MCF 10A (cell line): ENCODE measurements at regions of chr1 and their contacts with region 1.

Region 1: GRCh38 chr1:32521165-32521564 is 18.1 kb upstream of the ZBTB8A start:
- DNase-seq: no peak
- H3K4me3 Mint-ChIP-seq: peak overlapping the region; percentile 66
- H3K27ac Mint-ChIP-seq: no peak overlapping the region
- H3K4me1 Mint-ChIP-seq: peaks cover 5% of the 10 kb centered on the region
- H3K27me3 Mint-ChIP-seq: no peaks in the 10 kb centered on the region
- CTCF ChIP-seq: no peak

Region 2: DNA sequence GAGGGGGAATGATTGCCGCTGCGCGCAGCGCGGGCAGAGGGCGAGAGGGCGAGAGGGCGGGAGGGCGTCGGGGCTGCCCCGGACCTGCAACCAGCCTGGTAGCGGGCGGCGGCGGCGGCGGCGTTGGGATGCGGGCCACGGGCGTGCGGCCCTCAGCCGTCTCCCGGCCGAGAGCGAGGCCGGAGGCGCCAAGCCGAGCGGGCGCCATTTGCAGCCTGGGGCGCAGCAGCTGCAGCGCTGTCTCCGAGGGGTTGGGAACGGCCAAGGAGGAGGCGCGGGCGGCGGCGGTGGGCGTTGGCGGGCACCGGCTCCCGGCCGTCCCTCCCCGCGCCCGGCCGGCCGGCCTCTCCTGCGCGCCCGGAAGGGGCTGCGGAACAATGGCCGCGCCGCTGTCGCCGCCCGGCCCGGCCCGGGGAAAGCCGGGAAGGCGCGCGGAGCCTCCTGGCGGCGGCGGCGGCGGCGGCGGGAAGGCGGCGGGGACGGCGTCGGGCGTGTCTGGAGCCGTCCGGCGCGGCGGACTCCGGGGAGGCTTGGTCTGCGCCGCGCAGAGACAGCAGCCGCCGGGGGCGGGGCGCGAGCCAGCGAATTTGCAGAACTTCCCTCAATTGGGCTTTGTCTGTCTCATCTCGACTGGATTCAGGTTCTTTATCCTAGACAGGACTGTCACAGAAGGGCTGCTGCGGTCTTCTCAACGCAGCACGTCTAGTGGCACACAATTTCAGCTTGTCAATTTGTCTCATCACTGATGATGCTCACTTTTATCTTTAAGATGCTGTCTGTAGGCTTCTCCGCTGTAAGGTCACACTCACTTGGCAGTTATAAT is 20.6 kb before region 1 on chr1:
- CTCF ChIA-PET with region 1: interaction called, 13 read pairs
- POLR2A ChIA-PET with region 1: no interaction called
- intact Hi-C with region 1: no loop called
- DNase-seq: peak; percentile 67
- H3K4me3 Mint-ChIP-seq: peak overlapping the region; percentile 90
- H3K27ac Mint-ChIP-seq: peak overlapping the region; percentile 91
- H3K4me1 Mint-ChIP-seq: peaks cover 12% of the 10 kb centered on the region
- H3K27me3 Mint-ChIP-seq: no peaks in the 10 kb centered on the region
- CTCF ChIP-seq: no peak

Region 3: GRCh38 chr1:32533792-32534327 is 12.7 kb after region 1 on chr1:
- CTCF ChIA-PET with region 1: interaction called, 16 read pairs
- POLR2A ChIA-PET with region 1: interaction called, 5 read pairs
- intact Hi-C with region 1: no loop called
- DNase-seq: no peak
- H3K4me3 Mint-ChIP-seq: no peak overlapping the region
- H3K27ac Mint-ChIP-seq: no peak overlapping the region
- H3K4me1 Mint-ChIP-seq: peaks cover 3% of the 10 kb centered on the region
- H3K27me3 Mint-ChIP-seq: no peaks in the 10 kb centered on the region
- CTCF ChIP-seq: no peak

Region 4: DNA sequence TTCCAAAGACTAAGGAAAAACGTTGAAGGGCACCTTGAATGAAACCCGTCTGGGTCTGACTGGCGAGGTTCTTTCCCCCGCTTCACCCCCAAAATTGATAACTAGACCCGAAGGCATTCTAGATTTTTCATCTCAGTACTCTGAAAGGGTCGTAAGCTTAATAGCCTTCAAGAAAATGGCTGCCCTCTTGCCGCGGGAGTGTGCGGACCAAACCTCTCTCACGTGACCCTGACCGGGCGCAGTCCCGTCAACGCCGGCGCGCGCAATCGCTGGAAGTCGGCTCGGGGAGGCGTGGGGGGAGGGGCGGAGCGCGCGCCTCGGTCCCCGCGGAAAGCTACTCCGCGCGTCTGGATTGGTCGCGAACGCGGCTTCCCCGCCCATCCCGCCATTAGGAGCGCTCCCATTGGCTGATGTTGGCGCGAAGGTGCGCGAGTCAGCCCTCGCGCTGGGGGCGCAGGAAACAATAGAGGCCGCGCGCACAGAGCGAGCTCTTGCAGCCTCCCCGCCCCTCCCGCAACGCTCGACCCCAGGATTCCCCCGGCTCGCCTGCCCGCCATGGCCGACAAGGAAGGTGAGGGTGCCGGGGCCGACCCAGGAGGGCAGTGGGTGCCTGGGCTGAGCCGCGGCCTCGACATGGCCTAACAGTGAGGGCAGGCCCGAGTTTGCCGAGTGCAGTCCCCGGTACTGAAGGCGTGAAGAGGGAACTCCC is 129.7 kb after region 1 on chr1 and contains the start of gene RBBP4:
- CTCF ChIA-PET with region 1: interaction called, 13 read pairs
- POLR2A ChIA-PET with region 1: interaction called, 7 read pairs
- intact Hi-C with region 1: loop called (anchors 1 kb)
- DNase-seq: peak; percentile 96
- H3K4me3 Mint-ChIP-seq: peak within 1 kb of the TSS; percentile 97
- H3K27ac Mint-ChIP-seq: peak within 1 kb of the TSS; percentile 100
- H3K4me1 Mint-ChIP-seq: peaks cover 14% of the 10 kb centered on the region
- H3K27me3 Mint-ChIP-seq: no peaks in the 10 kb centered on the region
- CTCF ChIP-seq: no peak
- total RNA-seq, gene RBBP4: 165 and 179 TPM in 2 replicates